Heart right ventricle (tissue), 16 donors: ENCODE measurements at regions of chr11 and their contacts with region 1.

Region 1: GRCh38 chr11:21912285-21912684 is 280.6 kb upstream of the ANO5 start:
- DNase-seq: no peak
- ATAC-seq: peak in 1 of 8 donors; percentile 29
- H3K4me3 ChIP-seq: no peak overlapping the region
- H3K27ac ChIP-seq: no peak overlapping the region
- H3K4me1 ChIP-seq: peaks cover 0 to 15% (median 0%) of the 10 kb centered on the region in 9 donors
- H3K27me3 ChIP-seq: no peaks in the 10 kb centered on the region
- CTCF ChIP-seq: no peak

Region 2: DNA sequence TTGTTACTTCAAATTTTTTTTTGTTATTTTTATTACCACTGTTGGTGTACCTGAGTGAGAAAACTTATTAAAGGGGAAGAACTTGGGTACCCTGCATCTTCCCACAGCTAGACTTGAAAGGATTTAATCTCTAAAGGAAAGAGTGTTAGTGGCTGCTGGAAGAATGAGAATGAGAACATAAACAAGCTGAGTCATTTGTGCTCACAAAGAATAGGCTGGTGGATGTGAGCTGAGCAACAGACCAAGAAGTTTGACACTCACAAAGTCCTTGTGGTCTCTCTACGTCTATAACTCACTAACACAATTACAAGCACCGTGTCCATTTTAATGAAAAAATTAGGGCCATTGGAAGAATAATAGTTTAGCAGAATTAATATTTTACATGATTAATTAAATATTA is 63.0 kb after region 1 on chr11:
- intact Hi-C with region 1: loop called in 1 of 10 experiments (anchors 10 kb)
- DNase-seq: no peak
- ATAC-seq: no peak
- H3K4me3 ChIP-seq: no peak overlapping the region
- H3K27ac ChIP-seq: no peak overlapping the region
- H3K4me1 ChIP-seq: no peaks in the 10 kb centered on the region
- H3K27me3 ChIP-seq: no peaks in the 10 kb centered on the region
- CTCF ChIP-seq: no peak